ENCODE measurements at regions of chr3 and their contacts with region 1.

Region 1: GRCh38 chr3:63818281-63819150 is 583 bp upstream of the C3orf49 start:
- DNase-seq: peak; percentile 75
- ATAC-seq: peak; percentile 63
- H3K4me3 Mint-ChIP-seq: no peak overlapping the region
- H3K27ac Mint-ChIP-seq: no peak overlapping the region
- H3K4me1 Mint-ChIP-seq: no peaks in the 10 kb centered on the region
- H3K27me3 Mint-ChIP-seq: no peaks in the 10 kb centered on the region

Region 2: GRCh38 chr3:62201438-62202035 is 1617.0 kb before region 1 on chr3:
- CTCF ChIA-PET with region 1: no interaction called
- POLR2A ChIA-PET with region 1: no interaction called
- intact Hi-C with region 1: loop called in 1 of 2 experiments (anchors 5 kb)
- DNase-seq: no peak
- ATAC-seq: no peak
- H3K4me3 Mint-ChIP-seq: no peak overlapping the region
- H3K27ac Mint-ChIP-seq: no peak overlapping the region
- H3K4me1 Mint-ChIP-seq: no peaks in the 10 kb centered on the region
- H3K27me3 Mint-ChIP-seq: no peaks in the 10 kb centered on the region

Region 3: GRCh38 chr3:62622553-62623193 is 1195.8 kb before region 1 on chr3:
- CTCF ChIA-PET with region 1: interaction called, 13 read pairs
- POLR2A ChIA-PET with region 1: no interaction called
- intact Hi-C with region 1: loop called (anchors 1 to 5 kb)
- DNase-seq: peak; percentile 6
- ATAC-seq: no peak
- H3K4me3 Mint-ChIP-seq: no peak overlapping the region
- H3K27ac Mint-ChIP-seq: no peak overlapping the region
- H3K4me1 Mint-ChIP-seq: no peaks in the 10 kb centered on the region
- H3K27me3 Mint-ChIP-seq: peaks cover 17% of the 10 kb centered on the region

Region 4: GRCh38 chr3:63349583-63350521 is 468.7 kb before region 1 on chr3:
- CTCF ChIA-PET with region 1: interaction called, 82 read pairs
- POLR2A ChIA-PET with region 1: no interaction called
- intact Hi-C with region 1: loop called (anchors 1 kb)
- DNase-seq: peak; percentile 66
- ATAC-seq: peak; percentile 70
- H3K4me3 Mint-ChIP-seq: no peak overlapping the region
- H3K27ac Mint-ChIP-seq: no peak overlapping the region
- H3K4me1 Mint-ChIP-seq: no peaks in the 10 kb centered on the region
- H3K27me3 Mint-ChIP-seq: peaks cover 26% of the 10 kb centered on the region

Region 5: DNA sequence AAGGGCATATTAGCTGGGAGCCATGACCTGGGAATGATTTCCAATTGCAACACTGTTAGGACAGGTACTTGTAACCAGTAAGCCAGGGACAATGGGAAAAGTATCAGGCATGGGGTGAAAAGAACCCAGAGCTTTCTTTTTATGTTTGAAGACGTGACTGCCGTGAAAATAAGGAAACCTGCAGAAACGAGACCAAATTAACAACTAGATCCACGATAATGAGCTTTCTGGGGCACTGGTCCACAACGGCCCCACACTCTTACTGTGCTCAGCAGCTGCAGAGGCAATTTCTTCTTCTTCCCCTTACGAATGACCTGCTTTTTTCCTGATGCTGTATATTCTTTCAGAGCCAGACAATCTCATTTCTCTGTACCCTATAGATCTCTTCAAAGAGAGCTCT is 12.0 kb after region 1 on chr3:
- CTCF ChIA-PET with region 1: interaction called, 18 read pairs
- POLR2A ChIA-PET with region 1: no interaction called
- intact Hi-C with region 1: no loop called
- DNase-seq: no peak
- ATAC-seq: no peak
- H3K4me3 Mint-ChIP-seq: no peak overlapping the region
- H3K27ac Mint-ChIP-seq: no peak overlapping the region
- H3K4me1 Mint-ChIP-seq: no peaks in the 10 kb centered on the region
- H3K27me3 Mint-ChIP-seq: no peaks in the 10 kb centered on the region

Region 6: DNA sequence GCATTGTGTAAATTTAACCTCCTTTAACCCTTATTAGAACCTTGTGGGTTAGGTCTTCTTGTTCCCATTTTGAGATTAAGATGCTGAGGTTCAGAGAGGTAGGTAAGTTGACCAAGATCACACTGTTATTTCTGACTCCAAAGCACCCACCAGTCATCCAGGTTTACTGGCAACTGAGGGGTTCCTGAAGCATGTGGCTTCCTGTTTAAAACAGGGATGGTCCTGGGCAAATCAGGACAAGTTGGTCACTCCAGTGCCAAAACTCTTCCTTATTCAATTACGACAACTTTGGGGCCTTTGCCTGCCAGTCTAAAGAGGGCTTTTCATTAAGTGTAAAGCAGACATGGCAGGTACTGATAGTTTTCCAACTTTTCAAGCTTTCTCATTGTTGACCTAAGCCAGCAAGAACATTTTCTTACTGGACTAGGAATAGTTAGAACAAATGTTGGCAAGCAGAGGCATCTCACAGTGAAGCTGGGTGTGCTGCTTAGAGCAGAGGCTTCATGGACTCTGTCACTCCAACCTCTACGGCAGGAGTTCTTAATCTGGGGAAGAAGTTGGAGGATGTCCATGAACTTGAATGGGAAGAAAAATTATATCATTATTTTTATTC is 1018.7 kb after region 1 on chr3:
- CTCF ChIA-PET with region 1: no interaction called
- POLR2A ChIA-PET with region 1: no interaction called
- intact Hi-C with region 1: no loop called
- DNase-seq: no peak
- ATAC-seq: no peak
- H3K4me3 Mint-ChIP-seq: no peak overlapping the region
- H3K27ac Mint-ChIP-seq: no peak overlapping the region
- H3K4me1 Mint-ChIP-seq: no peaks in the 10 kb centered on the region
- H3K27me3 Mint-ChIP-seq: no peaks in the 10 kb centered on the region

Measured in activated CD4-positive, alpha-beta T cell treated with anti-CD3 and anti-CD28 coated beads for 36 hours (primary cell).